Naive thymus-derived CD4-positive, alpha-beta T cell (primary cell): ENCODE measurements at regions of chr12 and their contacts with region 1.

Region 1: GRCh38 chr12:67648521-67649260 is at the start of gene DYRK2:
- DNase-seq: peak; percentile 65 to 83 (median 78)
- ATAC-seq: peak; percentile 81
- H3K4me3 ChIP-seq: peak within 1 kb of the TSS; percentile 93
- H3K4me3 Mint-ChIP-seq: peak within 1 kb of the TSS; percentile 93 to 100 (median 98)
- H3K27ac ChIP-seq: peak within 1 kb of the TSS; percentile 90
- H3K27ac Mint-ChIP-seq: peak within 1 kb of the TSS; percentile 89 to 100 (median 98)
- H3K4me1 ChIP-seq: peaks cover 22 to 23% of the 10 kb centered on the region in 2 donors
- H3K4me1 Mint-ChIP-seq: peaks cover 38 to 48% (median 42%) of the 10 kb centered on the region in 7 donors
- H3K27me3 ChIP-seq: no peaks in the 10 kb centered on the region
- H3K27me3 Mint-ChIP-seq: peaks cover 0 to 13% (median 0%) of the 10 kb centered on the region in 5 donors
- total RNA-seq, gene DYRK2: 55.3 to 157 (median 119) TPM

Region 2: DNA sequence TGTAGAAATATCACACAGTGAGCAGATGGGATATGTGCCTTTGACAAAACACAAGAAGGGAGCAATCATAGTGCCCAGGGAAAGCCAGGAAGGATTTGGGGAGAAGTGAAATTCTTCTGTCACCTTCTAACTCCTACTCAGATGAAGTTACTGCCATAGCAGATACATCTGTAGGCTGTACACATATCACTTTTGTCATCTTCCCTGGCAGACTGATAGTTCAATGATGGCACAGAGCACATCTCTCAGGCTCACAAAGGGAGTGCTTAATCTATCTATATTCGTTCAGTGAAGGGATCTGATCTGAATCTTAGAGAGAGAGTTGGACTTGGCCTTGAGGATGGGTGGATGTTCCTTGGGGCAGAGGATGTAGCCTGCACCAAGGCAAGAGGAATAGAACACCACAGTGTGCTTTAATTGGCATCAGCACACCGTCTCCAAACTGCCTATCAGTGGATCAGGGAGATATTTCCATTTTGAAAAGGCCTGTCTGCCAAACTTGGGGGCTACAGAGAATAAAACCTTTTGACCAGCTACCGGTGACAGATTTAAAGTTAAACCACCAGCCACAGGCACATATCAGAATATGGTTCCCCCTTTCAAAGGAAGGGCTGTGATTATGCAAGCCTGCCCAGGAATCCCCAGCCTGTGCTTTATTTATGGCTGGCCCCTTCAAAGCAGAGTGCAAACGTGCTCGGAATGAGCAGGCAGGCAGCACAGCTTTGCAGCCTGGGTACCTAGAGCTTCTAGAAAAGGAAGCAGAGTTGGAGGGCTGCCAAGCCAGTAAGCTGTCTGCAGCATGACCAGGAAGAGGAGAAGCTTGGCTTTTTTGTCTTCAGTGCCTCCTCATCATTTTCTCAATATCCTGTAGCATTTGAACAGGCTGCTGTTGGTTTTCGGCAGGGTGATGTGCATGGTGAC is 165.7 kb before region 1 on chr12:
- CTCF ChIA-PET with region 1: no interaction called
- POLR2A ChIA-PET with region 1: interaction called, 9 read pairs
- intact Hi-C with region 1: loop called in 1 of 2 experiments (anchors 1 kb)
- DNase-seq: peak in 8 of 9 donors; percentile 47 to 89 (median 82)
- ATAC-seq: peak; percentile 89
- H3K4me3 ChIP-seq: no peak overlapping the region
- H3K4me3 Mint-ChIP-seq: peak overlapping the region in 9 of 10 donors; percentile 1 to 61 (median 26)
- H3K27ac ChIP-seq: peak overlapping the region; percentile 49
- H3K27ac Mint-ChIP-seq: peak overlapping the region; percentile 41 to 91 (median 82)
- H3K4me1 ChIP-seq: peaks cover 39 to 45% of the 10 kb centered on the region in 2 donors
- H3K4me1 Mint-ChIP-seq: peaks cover 28 to 49% (median 46%) of the 10 kb centered on the region in 7 donors
- H3K27me3 ChIP-seq: no peaks in the 10 kb centered on the region
- H3K27me3 Mint-ChIP-seq: no peaks in the 10 kb centered on the region

Region 3: DNA sequence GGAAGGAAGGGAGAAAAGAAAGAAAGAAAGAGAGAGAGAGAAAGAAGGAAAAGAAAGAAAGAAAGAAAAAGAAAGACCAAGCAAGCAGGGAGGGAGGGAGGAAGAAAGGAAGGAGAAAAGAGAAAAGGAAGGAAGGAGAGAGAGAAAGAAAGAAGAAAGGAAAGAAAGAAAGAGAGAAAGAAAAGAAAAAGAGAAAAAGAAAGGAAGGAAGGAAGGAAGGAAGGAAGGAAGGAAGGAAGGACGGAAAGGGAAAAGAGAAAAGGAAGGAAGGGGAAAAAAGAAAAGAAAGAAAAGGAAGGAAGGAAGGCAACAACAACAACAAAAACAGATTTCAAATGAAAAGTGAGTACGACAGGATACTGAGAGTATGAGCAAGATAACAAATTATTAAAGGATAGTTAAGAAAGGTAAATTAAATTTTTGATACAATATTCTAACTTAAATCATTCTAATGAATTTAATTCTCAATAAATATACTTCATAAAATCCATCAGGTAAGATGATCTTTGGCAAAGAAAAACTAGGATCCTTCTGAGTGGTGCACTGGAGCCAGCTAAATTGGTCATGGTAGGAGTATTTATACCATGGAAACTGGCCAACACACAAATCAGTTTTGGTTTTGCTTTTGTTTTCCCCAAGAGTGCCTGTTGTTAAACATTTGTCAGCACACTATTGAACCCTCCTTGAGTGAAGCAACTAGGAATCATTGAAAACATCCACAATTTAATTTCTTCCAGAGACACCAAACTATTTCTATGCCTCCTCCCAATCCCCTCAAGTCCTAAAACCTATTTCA is 56.3 kb before region 1 on chr12:
- CTCF ChIA-PET with region 1: interaction called, 5 read pairs
- POLR2A ChIA-PET with region 1: interaction called, 8 read pairs
- intact Hi-C with region 1: loop called (anchors 1 to 2 kb)
- DNase-seq: peak in 5 of 9 donors; percentile 20 to 40 (median 33)
- ATAC-seq: no peak
- H3K4me3 ChIP-seq: no peak overlapping the region
- H3K4me3 Mint-ChIP-seq: peak overlapping the region; percentile 6 to 84 (median 46)
- H3K27ac ChIP-seq: no peak overlapping the region
- H3K27ac Mint-ChIP-seq: peak overlapping the region; percentile 79 to 94 (median 86)
- H3K4me1 ChIP-seq: peaks cover 37 to 55% of the 10 kb centered on the region in 2 donors
- H3K4me1 Mint-ChIP-seq: peaks cover 40 to 79% (median 58%) of the 10 kb centered on the region in 7 donors
- H3K27me3 ChIP-seq: no peaks in the 10 kb centered on the region
- H3K27me3 Mint-ChIP-seq: no peaks in the 10 kb centered on the region

Region 4: GRCh38 chr12:67698672-67699581 is 50.2 kb after region 1 on chr12:
- CTCF ChIA-PET with region 1: no interaction called
- POLR2A ChIA-PET with region 1: interaction called, 3 read pairs
- intact Hi-C with region 1: loop called (anchors 1 kb)
- DNase-seq: peak in 8 of 9 donors; percentile 26 to 55 (median 44)
- ATAC-seq: peak; percentile 82
- H3K4me3 ChIP-seq: peak overlapping the region; percentile 39
- H3K4me3 Mint-ChIP-seq: peak overlapping the region; percentile 71 to 86 (median 82)
- H3K27ac ChIP-seq: peak overlapping the region; percentile 62
- H3K27ac Mint-ChIP-seq: peak overlapping the region; percentile 58 to 91 (median 73)
- H3K4me1 ChIP-seq: peaks cover 20 to 24% of the 10 kb centered on the region in 2 donors
- H3K4me1 Mint-ChIP-seq: peaks cover 28 to 74% (median 60%) of the 10 kb centered on the region in 7 donors
- H3K27me3 ChIP-seq: no peaks in the 10 kb centered on the region
- H3K27me3 Mint-ChIP-seq: peaks cover 0 to 58% (median 0%) of the 10 kb centered on the region in 5 donors

Region 5: DNA sequence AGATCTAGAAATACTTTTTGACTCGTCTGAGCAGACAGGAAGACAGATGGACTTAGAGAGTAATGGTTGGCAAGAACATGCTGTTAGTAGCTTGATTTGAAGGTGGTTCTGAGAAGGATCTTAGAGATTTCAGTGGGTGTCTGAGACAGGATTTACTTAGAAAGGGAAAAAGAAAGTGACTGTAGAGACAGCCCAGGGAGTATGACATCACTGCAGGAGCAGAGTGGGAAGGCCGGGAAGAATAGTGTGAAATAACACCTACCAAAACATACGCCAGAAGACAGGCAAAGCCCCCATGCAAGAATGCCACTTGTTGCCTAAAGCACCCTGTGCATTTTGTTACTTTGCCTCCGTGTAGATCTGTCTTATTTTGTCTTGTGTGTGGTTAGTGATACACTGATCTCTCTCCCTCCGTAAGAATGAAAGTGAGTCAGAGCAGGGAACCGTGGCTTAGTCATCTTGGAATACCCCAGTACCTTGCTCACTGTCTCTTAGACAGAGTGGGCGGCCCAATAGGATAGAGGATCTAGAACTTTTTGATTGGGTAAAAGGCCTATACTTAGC is 179.2 kb after region 1 on chr12:
- CTCF ChIA-PET with region 1: no interaction called
- POLR2A ChIA-PET with region 1: no interaction called
- intact Hi-C with region 1: no loop called
- DNase-seq: peak in 1 of 9 donors; percentile 39
- ATAC-seq: peak; percentile 60
- H3K4me3 ChIP-seq: no peak overlapping the region
- H3K4me3 Mint-ChIP-seq: peak overlapping the region in 2 of 10 donors; percentile 1 to 26
- H3K27ac ChIP-seq: no peak overlapping the region
- H3K27ac Mint-ChIP-seq: peak overlapping the region in 1 of 9 donors; percentile 0
- H3K4me1 ChIP-seq: no peaks in the 10 kb centered on the region
- H3K4me1 Mint-ChIP-seq: peaks cover 0 to 10% (median 0%) of the 10 kb centered on the region in 7 donors
- H3K27me3 ChIP-seq: no peaks in the 10 kb centered on the region
- H3K27me3 Mint-ChIP-seq: no peaks in the 10 kb centered on the region

Region 6: DNA sequence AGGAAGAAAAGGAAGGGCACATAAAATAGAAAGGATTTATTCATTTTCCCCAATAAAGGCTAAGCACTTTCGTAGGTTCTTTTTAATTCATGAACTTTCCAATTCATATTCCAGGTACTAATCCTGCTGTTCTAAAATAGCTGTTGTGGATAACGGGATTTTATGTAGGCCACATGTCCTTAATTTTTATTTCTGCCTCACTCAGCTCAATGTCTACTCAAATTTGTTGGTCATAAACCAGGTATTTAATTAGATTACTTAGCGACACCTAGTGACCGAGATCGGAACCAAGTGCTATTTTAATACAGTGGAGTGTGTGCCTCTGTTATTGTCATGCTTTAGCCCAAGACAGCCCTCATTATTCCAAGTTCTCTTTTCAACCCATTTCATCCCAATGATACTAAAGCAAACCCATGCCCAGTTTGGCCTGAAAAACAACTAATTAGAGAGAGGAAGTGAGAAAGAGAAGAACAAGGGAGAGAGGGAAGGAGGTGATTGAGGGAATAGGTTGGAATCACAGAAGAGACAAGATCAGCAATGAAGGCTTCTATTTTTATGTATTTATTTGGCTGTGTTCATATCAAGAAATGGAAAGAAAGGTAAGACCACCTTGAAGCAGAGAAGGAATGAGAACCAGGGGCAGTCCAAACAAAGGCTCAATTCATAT is 294.7 kb after region 1 on chr12:
- CTCF ChIA-PET with region 1: interaction called, 12 read pairs
- POLR2A ChIA-PET with region 1: interaction called, 6 read pairs
- intact Hi-C with region 1: loop called (anchors 1 kb)
- DNase-seq: peak; percentile 10 to 76 (median 64)
- ATAC-seq: peak; percentile 81
- H3K4me3 ChIP-seq: no peak overlapping the region
- H3K4me3 Mint-ChIP-seq: no peak overlapping the region
- H3K27ac ChIP-seq: no peak overlapping the region
- H3K27ac Mint-ChIP-seq: no peak overlapping the region
- H3K4me1 ChIP-seq: no peaks in the 10 kb centered on the region
- H3K4me1 Mint-ChIP-seq: peaks cover 0 to 6% (median 0%) of the 10 kb centered on the region in 7 donors
- H3K27me3 ChIP-seq: no peaks in the 10 kb centered on the region
- H3K27me3 Mint-ChIP-seq: peaks cover 0 to 18% (median 0%) of the 10 kb centered on the region in 5 donors